Breast epithelium (tissue), 4 donors: ENCODE measurements at regions of chr1 and their contacts with region 1.

Region 1: GRCh38 chr1:151839457-151840405 is at the start of gene C2CD4D:
- DNase-seq: peak; percentile 88
- H3K4me3 ChIP-seq: peak within 1 kb of the TSS; percentile 37 to 69 (median 49)
- H3K27ac ChIP-seq: peak within 1 kb of the TSS; percentile 95
- H3K4me1 ChIP-seq: peaks cover 0 to 5% of the 10 kb centered on the region in 2 donors
- H3K27me3 ChIP-seq: no peaks in the 10 kb centered on the region
- CTCF ChIP-seq: peak in 2 of 3 donors; percentile 25 to 42
- POLR2A ChIP-seq: peak; percentile 56
- total RNA-seq, gene C2CD4D: 0.32 to 0.73 TPM in 2 of 3 donors, not detected in the other

Region 2: GRCh38 chr1:150979092-150980056 is 860.4 kb before region 1 on chr1:
- intact Hi-C with region 1: loop called (anchors 5 kb)
- DNase-seq: peak; percentile 84 to 85
- H3K4me3 ChIP-seq: peak overlapping the region; percentile 9 to 37 (median 24)
- H3K27ac ChIP-seq: peak overlapping the region; percentile 68 to 73
- H3K4me1 ChIP-seq: peaks cover 6 to 9% of the 10 kb centered on the region in 2 donors
- H3K27me3 ChIP-seq: no peaks in the 10 kb centered on the region
- CTCF ChIP-seq: peak; percentile 94 to 99 (median 99)
- POLR2A ChIP-seq: no peak

Region 3: GRCh38 chr1:151811147-151811546 is 28.6 kb before region 1 on chr1:
- intact Hi-C with region 1: no loop called
- DNase-seq: no peak
- H3K4me3 ChIP-seq: peak overlapping the region in 1 of 3 donors; percentile 19
- H3K27ac ChIP-seq: no peak overlapping the region
- H3K4me1 ChIP-seq: no peaks in the 10 kb centered on the region
- H3K27me3 ChIP-seq: no peaks in the 10 kb centered on the region
- CTCF ChIP-seq: no peak
- POLR2A ChIP-seq: no peak